ENCODE measurements at regions of chrX and their contacts with region 1.

Region 1: DNA sequence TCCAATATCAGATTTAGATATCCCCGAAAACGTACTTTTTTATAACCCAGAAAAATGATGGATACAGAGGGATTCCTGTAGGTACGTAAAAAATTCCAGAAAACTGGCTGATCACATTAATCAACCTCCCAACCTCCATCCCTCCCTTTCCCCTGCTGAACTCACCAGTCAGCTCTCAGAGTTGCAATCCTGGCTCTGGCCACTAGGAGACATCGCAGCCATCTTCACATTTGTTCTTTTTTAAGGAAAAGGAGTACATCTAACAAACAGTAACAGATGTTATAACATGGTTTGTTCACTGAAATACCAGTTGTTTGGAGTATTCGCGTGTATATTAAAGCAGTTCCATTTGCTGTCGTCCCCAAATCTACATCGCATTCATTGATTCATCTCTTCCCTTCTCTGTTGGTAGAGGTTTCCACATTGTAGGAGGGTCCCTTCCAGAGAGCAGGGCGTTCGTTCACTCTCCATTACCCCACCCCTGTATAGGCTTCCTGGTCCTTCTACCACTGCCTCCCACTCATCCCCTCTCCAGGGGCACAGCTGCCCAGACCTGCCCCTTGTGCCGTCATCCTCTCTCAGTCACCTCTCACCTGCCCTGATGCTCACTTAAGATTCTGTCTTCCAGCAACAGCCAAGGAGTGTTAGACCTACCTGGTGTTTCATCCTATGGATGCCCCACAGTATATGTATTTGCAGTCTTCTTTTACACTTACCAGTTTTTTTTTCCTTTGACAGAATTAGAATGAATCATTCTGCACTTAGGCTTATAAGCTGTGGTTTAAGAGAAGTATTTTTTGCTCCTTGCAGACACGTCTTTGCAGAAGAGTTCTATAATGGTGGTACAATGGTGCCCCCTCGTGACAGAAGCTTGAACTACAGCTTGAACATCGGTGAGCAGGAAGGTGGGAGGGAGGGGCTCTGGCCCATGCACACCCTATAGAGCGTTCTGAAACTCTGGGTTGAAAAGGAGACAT is 36.8 kb upstream of the RAB40AL start:
- DNase-seq: peak; percentile 92

Region 2: GRCh38 chrX:102129473-102129872 is 770.8 kb before region 1 on chrX:
- in situ Hi-C with region 1: loop called (anchors 25 kb)
- DNase-seq: peak; percentile 34

Region 3: GRCh38 chrX:102498732-102499131 is 401.5 kb before region 1 on chrX:
- in situ Hi-C with region 1: no loop called
- DNase-seq: no peak

Region 4: DNA sequence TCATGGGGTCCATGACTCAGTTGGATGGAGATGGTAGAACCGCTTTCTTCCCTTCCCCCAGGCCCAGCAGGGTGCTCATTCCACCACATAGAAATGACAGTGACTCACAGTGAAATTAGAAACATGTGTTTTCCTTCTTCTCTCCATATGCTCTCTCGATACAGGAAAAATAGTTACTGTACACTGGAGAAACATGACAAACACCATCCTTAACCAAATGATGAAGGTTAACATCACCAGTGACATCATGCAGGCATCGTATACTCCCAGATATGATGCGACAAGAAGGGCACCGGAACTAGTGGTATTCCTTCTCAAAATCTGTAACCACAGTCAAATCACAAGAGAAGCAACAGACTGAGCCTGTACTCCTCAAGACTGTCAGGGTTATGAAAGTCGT is 630.8 kb after region 1 on chrX:
- in situ Hi-C with region 1: no loop called
- DNase-seq: no peak